Heart left ventricle (tissue), 16 donors: ENCODE measurements at regions of chr12 and their contacts with region 1.

Region 1: DNA sequence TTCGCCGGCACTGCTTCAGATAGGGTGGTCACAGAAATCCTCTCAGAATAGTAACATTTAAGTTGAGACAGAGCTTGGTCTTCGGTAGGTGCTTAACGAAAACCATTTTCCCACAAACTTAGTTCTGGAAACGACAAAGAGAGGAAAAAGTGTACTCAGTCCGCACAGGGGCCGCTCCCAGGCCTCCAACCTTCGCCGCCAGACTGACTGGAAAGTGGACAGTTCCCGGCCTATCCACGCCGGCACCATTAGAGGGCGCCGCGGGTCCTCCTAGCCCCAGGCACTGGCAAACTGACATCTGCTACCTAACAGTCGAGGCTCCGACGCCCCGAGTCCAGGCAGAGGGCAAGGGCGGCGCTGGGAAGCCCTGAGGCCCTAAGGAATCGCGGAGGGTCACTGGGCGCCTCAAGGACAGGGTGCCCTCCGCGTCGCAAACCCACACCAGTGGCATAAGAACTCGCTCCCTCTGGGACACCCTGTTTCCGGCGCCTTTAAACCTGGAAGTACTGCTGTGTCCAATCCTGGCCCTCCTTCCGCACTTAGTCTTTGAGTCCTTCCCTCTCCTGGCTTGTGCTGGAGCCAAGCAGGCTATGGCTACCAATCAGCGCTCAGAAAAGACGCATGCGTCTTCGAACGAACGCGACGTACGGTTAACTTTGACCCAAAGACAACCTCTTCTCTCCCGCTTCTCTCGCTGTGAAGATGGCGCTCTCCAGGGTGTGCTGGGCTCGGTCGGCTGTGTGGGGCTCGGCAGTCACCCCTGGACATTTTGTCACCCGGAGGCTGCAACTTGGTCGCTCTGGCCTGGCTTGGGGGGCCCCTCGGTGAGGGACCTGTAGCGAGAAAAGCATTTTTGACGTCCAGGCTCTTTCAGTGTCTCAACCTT is at the start of gene LETMD1:
- DNase-seq: peak; percentile 92 to 97 (median 96)
- ATAC-seq: peak; percentile 100
- H3K4me3 ChIP-seq: peak within 1 kb of the TSS; percentile 58 to 93 (median 80)
- H3K27ac ChIP-seq: peak within 1 kb of the TSS; percentile 87 to 100 (median 96)
- H3K4me1 ChIP-seq: peaks cover 0 to 29% (median 19%) of the 10 kb centered on the region in 12 donors
- H3K27me3 ChIP-seq: no peaks in the 10 kb centered on the region
- CTCF ChIP-seq: peak; percentile 82 to 98 (median 94)
- POLR2A ChIP-seq: peak in 1 of 2 donors; percentile 65
- total RNA-seq, gene LETMD1: 13.6 to 34.4 (median 22.7) TPM

Region 2: DNA sequence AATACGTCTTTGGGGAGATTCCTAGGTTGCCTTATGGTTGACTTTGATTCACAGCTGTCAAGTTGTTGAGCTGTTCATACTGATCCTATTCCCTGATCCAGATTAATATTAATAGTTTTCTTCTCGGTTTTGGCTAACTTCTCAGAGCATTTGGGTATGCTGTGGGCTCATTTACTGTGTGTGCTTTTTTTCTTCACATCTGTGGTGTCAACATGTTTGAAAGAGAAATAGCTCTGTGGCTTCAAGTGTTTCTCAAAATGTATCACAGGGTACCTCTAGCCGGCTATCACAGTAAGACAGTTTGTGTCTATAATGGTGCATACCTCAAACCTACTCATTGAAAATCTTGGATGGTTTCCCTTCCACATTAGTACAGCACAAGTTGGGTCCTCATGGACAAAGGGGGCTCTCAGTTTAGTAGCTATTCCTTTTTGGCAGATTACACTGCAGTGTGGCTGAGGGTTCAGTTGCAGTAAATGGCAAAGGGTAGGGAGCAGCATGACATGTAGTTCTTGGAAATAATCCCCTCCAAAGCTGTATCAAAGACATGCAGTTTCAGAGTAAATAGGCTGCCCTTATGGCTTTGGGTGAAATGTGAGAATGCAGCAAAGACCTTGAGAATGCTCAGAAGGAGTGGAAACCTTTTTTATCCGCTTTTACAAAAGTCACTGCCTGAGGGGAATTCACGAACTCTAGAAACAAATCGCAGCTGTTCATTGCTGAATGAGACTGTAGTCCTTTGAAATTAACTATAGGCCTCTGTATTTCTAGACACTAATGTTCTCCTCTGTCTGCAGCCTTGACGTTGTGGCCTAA is 386.4 kb before region 1 on chr12:
- intact Hi-C with region 1: no loop called
- DNase-seq: no peak
- ATAC-seq: no peak
- H3K4me3 ChIP-seq: no peak overlapping the region
- H3K27ac ChIP-seq: no peak overlapping the region
- H3K4me1 ChIP-seq: no peaks in the 10 kb centered on the region
- H3K27me3 ChIP-seq: no peaks in the 10 kb centered on the region
- CTCF ChIP-seq: no peak
- POLR2A ChIP-seq: no peak

Region 3: GRCh38 chr12:51025836-51026638 is 21.9 kb before region 1 on chr12 and contains the start of gene SLC11A2:
- intact Hi-C with region 1: loop called in 1 of 10 experiments (anchors 1 kb)
- DNase-seq: peak; percentile 96 to 98 (median 97)
- ATAC-seq: peak; percentile 98 to 99 (median 98)
- H3K4me3 ChIP-seq: peak within 1 kb of the TSS; percentile 75 to 96 (median 89)
- H3K27ac ChIP-seq: peak within 1 kb of the TSS; percentile 64 to 94 (median 86)
- H3K4me1 ChIP-seq: peaks cover 0 to 55% (median 20%) of the 10 kb centered on the region in 12 donors
- H3K27me3 ChIP-seq: no peaks in the 10 kb centered on the region
- CTCF ChIP-seq: peak in 3 of 12 donors; percentile 11 to 27 (median 15)
- POLR2A ChIP-seq: peak in 1 of 2 donors; percentile 67
- total RNA-seq, gene SLC11A2: 16.3 to 45.3 (median 22.0) TPM

Region 4: DNA sequence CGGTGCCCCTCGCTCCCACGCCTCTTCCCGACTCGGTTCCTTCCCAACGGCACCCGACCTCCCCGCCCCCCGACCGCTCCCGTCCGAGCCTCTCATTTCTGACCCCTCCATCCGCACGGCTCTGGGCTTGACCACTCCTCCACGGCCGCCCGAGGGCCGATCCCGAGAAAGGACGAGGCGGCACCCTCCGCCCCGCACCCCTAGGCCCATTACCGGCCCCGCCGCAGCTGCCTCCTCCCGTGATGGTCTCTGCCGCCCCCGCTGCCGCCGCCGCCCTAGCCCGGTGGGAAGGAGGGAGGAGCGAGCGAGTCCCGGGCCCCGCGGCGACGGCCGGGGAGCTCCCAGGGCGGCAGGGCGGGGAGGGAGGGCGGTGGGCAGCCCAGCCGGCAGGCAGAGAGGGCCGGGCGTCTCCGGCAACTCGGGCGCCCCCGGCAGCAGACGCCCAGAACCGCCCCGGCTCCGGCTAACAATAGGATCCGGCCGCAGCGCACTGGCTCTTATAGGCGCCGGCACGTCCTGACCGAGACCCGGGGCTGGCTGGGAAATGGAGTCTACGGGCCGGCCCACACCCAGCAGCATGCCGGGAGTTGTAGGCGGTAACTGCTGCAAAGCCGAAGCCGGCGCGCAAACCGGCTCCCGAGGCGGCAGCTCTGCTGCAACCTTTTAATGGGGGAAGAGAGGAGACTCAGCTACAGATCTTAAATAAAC is 35.4 kb after region 1 on chr12 and contains the start of gene CSRNP2:
- intact Hi-C with region 1: loop called in 5 of 10 experiments (anchors 2 to 5 kb)
- DNase-seq: peak; percentile 97 to 98 (median 97)
- ATAC-seq: peak; percentile 99 to 100 (median 100)
- H3K4me3 ChIP-seq: peak within 1 kb of the TSS; percentile 74 to 99 (median 86)
- H3K27ac ChIP-seq: peak within 1 kb of the TSS; percentile 85 to 97 (median 92)
- H3K4me1 ChIP-seq: peaks cover 0 to 42% (median 18%) of the 10 kb centered on the region in 12 donors
- H3K27me3 ChIP-seq: no peaks in the 10 kb centered on the region
- CTCF ChIP-seq: peak in 4 of 12 donors; percentile 9 to 40 (median 21)
- POLR2A ChIP-seq: peak; percentile 99 to 100
- total RNA-seq, gene CSRNP2: 12.8 to 25.7 (median 18.5) TPM

Region 5: GRCh38 chr12:51217968-51218606 is 170.2 kb after region 1 on chr12 and contains the start of gene POU6F1:
- intact Hi-C with region 1: loop called in 1 of 10 experiments (anchors 10 kb)
- DNase-seq: peak; percentile 74 to 86 (median 79)
- ATAC-seq: peak; percentile 81 to 94 (median 92)
- H3K4me3 ChIP-seq: peak within 1 kb of the TSS; percentile 72 to 96 (median 84)
- H3K27ac ChIP-seq: peak within 1 kb of the TSS; percentile 85 to 99 (median 96)
- H3K4me1 ChIP-seq: peaks cover 0 to 27% (median 14%) of the 10 kb centered on the region in 12 donors
- H3K27me3 ChIP-seq: no peaks in the 10 kb centered on the region
- CTCF ChIP-seq: peak in 11 of 12 donors; percentile 36 to 68 (median 60)
- POLR2A ChIP-seq: peak in 1 of 2 donors; percentile 43
- total RNA-seq, gene POU6F1: 4.6 to 14.0 (median 6.8) TPM

Region 6: GRCh38 chr12:51238510-51239334 is 190.8 kb after region 1 on chr12 and contains the start of gene DAZAP2:
- intact Hi-C with region 1: loop called in 5 of 10 experiments (anchors 2 to 10 kb)
- DNase-seq: peak; percentile 97 to 98 (median 98)
- ATAC-seq: peak; percentile 97 to 99 (median 98)
- H3K4me3 ChIP-seq: peak within 1 kb of the TSS; percentile 63 to 100 (median 97)
- H3K27ac ChIP-seq: peak within 1 kb of the TSS; percentile 95 to 100 (median 100)
- H3K4me1 ChIP-seq: peaks cover 0 to 49% (median 23%) of the 10 kb centered on the region in 12 donors
- H3K27me3 ChIP-seq: no peaks in the 10 kb centered on the region
- CTCF ChIP-seq: peak in 10 of 12 donors; percentile 13 to 43 (median 22)
- POLR2A ChIP-seq: peak; percentile 77 to 90
- total RNA-seq, gene DAZAP2: 147 to 313 (median 192) TPM

Region 7: DNA sequence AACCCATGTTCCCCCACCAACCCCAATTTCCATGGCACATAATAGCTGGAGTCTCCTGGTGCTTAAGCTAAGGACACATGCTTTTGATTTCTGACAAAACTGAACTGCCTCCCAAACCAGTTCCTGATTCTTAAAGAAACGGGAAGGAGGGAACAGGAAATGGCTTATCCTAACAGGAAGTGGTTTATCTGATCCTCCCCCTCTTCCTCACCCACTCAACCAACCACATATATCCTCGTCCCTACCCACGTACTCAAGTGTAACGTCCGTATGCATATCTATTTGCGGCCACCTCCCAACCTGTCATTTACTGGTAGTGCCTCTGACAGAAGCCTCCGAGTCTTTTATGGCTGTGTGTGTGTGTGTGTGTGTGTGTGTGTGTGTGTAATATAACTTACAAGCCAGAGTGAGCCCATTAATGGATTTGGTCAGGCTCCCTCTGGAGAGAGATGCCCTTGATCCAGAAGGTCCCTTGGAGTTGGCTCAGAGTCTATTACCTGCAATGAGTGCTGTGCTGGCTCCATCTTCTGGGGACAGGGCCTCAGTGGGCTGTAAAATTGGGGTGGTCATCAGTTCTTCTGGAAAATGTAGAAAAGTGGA is 198.5 kb after region 1 on chr12:
- intact Hi-C with region 1: loop called in 3 of 10 experiments (anchors 5 to 10 kb)
- DNase-seq: peak in 1 of 5 donors; percentile 36
- ATAC-seq: peak; percentile 23 to 85 (median 68)
- H3K4me3 ChIP-seq: no peak overlapping the region
- H3K27ac ChIP-seq: peak overlapping the region in 7 of 12 donors; percentile 3 to 84 (median 12)
- H3K4me1 ChIP-seq: peaks cover 0 to 63% (median 22%) of the 10 kb centered on the region in 12 donors
- H3K27me3 ChIP-seq: no peaks in the 10 kb centered on the region
- CTCF ChIP-seq: peak in 4 of 12 donors; percentile 8 to 32 (median 10)
- POLR2A ChIP-seq: no peak

Region 8: DNA sequence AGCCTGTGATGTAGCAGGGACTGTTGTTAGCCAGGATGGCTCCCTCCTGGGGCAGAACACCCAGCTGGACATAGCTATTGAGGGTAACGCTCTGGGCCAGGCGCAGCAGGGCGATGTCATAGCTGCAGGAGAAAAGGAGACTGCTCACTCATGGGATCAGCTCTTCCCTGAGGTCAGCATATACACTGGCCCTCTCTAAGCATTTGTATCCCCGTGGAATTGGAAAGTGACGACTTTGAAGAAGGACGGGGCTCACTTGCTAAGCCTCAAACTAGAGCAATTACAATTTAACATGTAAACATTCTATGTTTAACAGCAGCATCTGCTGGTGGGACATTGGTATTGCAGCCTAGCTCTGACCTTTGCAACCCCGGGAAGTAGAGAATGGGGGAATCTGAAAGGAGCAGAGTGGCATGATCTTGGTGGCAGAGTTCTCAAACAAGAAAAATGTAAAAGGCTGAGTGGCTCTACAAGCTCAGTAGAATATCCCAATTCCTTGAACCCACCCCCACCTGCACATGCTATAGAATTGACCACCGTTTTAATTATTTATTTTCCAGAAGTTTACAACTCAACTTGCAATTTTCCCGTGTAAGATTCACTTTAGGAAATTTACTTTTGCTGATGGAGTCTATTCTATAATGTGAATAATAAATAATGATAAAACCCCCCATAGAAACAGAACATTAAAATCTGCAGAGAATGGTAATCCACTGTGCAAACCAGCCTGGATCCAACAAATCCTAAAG is 293.5 kb after region 1 on chr12:
- intact Hi-C with region 1: loop called in 6 of 10 experiments (anchors 5 to 10 kb)
- DNase-seq: peak in 4 of 5 donors; percentile 42 to 64 (median 46)
- ATAC-seq: peak; percentile 42 to 88 (median 88)
- H3K4me3 ChIP-seq: peak overlapping the region in 8 of 12 donors; percentile 8 to 51 (median 28)
- H3K27ac ChIP-seq: peak overlapping the region in 1 of 12 donors; percentile 1
- H3K4me1 ChIP-seq: peaks cover 0 to 6% (median 1%) of the 10 kb centered on the region in 12 donors
- H3K27me3 ChIP-seq: no peaks in the 10 kb centered on the region
- CTCF ChIP-seq: peak; percentile 89 to 99 (median 94)
- POLR2A ChIP-seq: no peak